Sciatic nerve (tissue), 2 donors: ENCODE measurements at regions of chr20 and their contacts with region 1.

Region 1: GRCh38 chr20:38229376-38230252 is 30.9 kb downstream of the KIAA1755 start:
- DNase-seq: no peak
- ATAC-seq: peak; percentile 9

Region 2: DNA sequence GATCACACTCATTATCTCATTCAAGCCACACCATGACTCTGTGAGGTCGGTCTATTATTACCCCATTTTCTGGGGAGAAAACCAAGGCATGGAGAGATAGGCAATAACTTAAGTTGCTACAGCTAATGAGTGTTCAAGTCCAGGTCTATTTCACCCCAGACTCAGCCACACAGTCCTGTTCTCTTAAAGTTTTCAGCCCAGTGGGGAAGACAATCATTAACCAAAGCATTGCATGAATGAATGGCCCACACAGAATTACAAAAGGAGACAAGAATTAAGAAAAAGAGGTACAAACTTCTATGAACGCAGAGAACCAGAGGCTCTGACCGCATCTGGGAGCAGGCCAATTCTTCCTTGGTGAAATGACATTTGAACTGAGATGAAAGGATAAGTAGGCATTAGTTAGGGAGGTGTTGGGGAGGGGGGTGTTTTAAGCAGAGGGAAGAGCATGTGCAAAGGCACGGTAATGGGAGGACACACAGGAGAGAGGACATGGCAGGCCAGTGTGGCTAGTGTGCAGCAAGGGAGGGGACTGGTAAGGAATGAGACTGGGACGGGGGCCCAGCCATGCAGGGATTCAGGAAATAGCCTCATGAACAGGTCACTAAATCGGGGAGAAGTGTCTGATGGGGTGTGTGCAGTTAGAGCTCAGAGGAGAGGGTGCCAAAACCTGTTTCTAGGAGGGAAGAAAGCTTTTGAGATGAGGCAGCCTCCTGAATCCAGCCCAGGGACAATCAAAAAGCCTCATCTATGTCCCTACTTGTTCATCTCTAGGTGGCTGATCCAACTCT is 81.7 kb after region 1 on chr20:
- intact Hi-C with region 1: loop called (anchors 5 kb)
- DNase-seq: no peak
- ATAC-seq: no peak